Activated CD8-positive, alpha-beta T cell treated with anti-CD3 and anti-CD28 coated beads for 36 hours (primary cell): ENCODE measurements at regions of chr16 and their contacts with region 1.

Region 1: DNA sequence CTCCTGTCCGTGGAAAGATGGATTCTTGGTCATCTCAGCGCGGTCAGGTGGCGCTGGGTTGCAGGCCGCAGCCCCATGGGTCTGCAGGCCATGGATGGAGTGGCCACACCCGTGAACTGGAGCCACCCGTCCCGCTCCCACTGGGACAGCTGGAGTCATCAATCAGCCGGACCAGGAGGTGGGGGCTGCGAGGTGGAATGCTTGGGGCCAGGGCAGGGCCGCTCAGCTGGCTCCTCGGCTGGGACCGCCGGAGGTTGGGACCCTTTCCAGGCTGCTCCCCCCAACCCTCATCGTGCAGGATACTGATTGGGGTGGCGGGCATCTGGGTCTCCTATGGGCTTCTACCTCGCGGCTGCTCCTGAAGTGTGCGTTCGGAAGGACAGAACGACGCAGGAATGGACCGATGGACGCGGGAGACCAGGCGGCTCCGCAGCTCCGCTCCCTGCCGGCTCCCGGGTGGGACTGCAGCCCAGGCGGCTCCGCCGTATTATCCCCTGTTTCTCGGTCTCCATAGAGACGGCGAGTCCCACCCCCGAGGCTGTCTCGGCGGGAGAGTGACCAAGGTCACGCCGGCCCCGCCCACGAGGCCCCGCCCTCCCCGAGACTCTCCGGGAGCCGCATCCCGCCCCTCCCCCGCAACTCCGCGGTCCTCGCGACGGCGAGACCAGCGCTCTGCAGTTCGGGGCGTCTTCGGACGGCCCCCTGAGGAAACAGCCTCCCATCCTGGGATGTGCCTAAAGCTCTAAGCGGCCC is at the start of gene TPPP3:
- DNase-seq: peak; percentile 76
- ATAC-seq: peak; percentile 83
- H3K4me3 Mint-ChIP-seq: peak within 1 kb of the TSS; percentile 21
- H3K27ac Mint-ChIP-seq: no peak within 1 kb of the TSS
- H3K4me1 Mint-ChIP-seq: peaks cover 4% of the 10 kb centered on the region
- H3K27me3 Mint-ChIP-seq: peaks cover 28% of the 10 kb centered on the region
- CTCF ChIP-seq: peak; percentile 63
- total RNA-seq, gene TPPP3: not detected

Region 2: DNA sequence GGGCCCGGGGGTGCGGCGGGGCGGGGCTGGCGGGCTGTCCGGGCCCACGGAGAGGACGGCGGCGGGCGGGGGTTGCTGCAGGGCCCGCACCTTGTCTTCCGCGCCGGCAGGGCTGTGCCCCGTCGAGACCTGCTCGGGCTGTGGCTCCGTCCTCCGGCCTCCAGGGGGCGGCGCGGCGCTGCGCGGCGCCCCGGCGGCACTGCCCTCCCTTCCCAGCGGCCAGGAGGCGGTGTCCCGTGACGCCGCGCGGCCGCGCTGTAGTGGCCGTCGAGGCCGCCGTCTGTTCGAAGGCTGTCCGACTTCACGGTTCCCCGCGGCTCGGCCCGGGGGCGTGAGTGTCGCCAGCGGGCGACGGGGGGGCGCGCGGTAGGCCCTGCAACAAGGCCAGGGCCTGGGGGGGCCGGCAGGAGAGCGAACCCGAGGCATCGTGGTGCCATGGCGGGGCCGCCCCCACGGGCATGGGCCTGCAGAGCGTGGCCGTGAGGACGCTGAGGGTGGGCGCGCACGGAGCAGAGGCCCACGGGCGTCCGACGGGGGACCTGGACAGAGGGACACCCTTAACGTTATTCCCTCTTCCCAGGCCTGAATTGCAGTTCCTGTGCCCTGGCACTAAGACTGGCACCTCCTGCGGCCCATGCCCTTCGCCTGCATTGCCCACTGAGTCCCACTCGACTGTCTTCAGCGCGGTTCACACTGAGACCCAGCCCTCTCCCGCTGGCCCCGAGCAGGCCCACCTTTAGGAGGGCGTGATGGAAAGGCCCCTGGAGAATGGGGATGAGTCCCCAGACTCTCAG is 113.7 kb before region 1 on chr16 and contains the start of gene PLEKHG4:
- CTCF ChIA-PET with region 1: interaction called, 10 read pairs
- POLR2A ChIA-PET with region 1: no interaction called
- intact Hi-C with region 1: no loop called
- DNase-seq: peak; percentile 87
- ATAC-seq: peak; percentile 94
- H3K4me3 Mint-ChIP-seq: peak within 1 kb of the TSS; percentile 89
- H3K27ac Mint-ChIP-seq: peak within 1 kb of the TSS; percentile 90
- H3K4me1 Mint-ChIP-seq: peaks cover 18% of the 10 kb centered on the region
- H3K27me3 Mint-ChIP-seq: no peaks in the 10 kb centered on the region
- CTCF ChIP-seq: peak; percentile 86
- total RNA-seq, gene PLEKHG4: 17.3 to 20.8 TPM